Activated naive CD8-positive, alpha-beta T cell treated with anti-CD3 and anti-CD28 coated beads, Interleukin-2, amount 10 ng/mL, durations not matched to agents 7 days and 5 days (primary cell): ENCODE measurements at regions of chr1 and their contacts with region 1.

Region 1: DNA sequence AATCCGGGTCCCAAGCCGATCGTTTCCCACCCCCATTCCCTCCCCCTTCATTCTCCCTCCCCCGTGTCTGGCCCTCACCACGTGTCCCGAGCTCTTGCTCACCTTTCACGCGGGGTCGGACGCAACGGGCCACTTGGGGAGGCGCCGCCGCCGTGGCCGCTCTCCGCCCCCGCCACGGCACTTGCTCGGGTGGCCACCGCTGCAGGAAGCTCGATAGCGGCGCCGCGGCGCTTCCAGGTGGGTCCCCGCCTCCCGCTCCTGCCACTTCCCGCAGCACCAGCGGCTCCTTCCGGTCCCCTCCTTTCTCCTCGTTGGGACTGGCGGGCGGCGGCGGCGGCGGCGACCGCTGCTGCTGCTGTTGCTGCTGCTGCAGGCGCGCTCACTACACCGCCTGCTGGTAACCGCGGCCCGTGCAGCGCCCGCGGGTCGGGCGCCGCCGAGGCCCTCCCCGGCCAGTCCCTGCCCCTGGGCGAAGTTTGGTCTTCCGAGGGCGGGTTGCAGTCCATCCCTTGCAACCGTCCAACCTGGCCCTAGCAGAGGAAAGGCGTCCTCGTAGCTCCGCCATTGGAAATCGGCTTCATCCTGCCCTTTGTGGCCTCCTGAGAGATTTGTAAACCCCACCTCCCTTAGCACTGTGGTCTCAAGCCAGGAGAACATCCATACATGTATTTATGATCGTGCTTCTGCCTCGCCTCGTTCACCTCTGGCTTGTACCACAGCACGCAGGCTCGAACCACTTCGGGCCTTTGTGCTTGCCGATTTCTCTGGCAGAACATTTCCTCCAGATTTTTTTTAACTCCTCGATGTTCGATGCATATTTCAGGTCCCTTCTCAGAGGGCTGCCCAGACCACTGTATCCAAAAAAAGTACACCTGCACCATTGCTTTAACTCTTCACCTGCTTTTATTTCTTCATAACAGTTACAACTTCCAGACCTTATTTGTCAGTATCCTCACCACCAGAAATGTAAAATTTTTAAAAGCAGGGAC is 996 bp upstream of the ZZZ3 start:
- DNase-seq: peak; percentile 95
- ATAC-seq: peak; percentile 75
- H3K4me3 Mint-ChIP-seq: peak overlapping the region; percentile 90
- H3K27ac Mint-ChIP-seq: peak overlapping the region; percentile 95
- H3K4me1 Mint-ChIP-seq: peaks cover 17% of the 10 kb centered on the region
- H3K27me3 Mint-ChIP-seq: no peaks in the 10 kb centered on the region

Region 2: DNA sequence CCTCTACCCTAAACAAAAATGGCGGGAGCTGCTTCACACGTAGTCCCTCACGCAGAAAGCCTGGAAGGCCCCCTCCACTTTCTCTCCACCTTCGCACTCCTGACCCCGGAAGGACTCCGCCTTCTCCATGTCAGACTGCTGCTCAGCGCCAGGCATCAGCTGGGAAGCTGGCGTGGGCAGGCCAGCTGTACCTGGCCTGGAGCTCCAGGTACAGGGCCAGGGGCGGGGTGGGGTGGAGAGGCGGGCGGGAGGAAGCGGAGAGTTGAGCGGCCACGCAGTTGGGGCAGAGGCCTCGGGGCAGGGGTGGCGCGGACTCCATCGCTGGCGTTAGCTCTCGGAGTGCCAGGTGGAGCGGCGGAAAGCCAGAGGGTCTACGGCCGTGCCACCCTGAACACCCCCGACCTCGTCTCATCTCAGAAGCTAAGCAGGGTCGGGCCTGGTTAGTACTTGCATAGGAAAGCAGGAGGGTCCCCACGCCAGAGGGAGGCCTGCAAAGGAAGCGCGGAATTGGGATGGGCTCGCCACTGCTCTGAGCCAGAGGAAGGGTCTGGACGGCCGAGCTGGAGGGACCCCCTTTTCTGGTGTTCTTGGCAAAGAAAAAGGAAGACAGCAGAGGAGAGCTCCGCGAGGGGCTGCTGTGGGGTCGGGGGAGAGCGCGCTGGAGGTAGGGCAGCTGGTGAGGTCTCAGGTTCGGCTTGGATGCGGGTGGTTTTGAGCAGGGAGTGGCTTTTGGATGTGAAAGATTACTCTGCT is 96.3 kb after region 1 on chr1 and contains the start of gene MIGA1:
- POLR2A ChIA-PET with region 1: interaction called, 10 read pairs
- DNase-seq: peak; percentile 75
- ATAC-seq: peak; percentile 98
- H3K4me3 Mint-ChIP-seq: peak within 1 kb of the TSS; percentile 98
- H3K27ac Mint-ChIP-seq: peak within 1 kb of the TSS; percentile 86
- H3K4me1 Mint-ChIP-seq: peaks cover 25% of the 10 kb centered on the region
- H3K27me3 Mint-ChIP-seq: peaks cover 3% of the 10 kb centered on the region
- total RNA-seq, gene MIGA1: 13.6 to 14.3 TPM

Region 3: DNA sequence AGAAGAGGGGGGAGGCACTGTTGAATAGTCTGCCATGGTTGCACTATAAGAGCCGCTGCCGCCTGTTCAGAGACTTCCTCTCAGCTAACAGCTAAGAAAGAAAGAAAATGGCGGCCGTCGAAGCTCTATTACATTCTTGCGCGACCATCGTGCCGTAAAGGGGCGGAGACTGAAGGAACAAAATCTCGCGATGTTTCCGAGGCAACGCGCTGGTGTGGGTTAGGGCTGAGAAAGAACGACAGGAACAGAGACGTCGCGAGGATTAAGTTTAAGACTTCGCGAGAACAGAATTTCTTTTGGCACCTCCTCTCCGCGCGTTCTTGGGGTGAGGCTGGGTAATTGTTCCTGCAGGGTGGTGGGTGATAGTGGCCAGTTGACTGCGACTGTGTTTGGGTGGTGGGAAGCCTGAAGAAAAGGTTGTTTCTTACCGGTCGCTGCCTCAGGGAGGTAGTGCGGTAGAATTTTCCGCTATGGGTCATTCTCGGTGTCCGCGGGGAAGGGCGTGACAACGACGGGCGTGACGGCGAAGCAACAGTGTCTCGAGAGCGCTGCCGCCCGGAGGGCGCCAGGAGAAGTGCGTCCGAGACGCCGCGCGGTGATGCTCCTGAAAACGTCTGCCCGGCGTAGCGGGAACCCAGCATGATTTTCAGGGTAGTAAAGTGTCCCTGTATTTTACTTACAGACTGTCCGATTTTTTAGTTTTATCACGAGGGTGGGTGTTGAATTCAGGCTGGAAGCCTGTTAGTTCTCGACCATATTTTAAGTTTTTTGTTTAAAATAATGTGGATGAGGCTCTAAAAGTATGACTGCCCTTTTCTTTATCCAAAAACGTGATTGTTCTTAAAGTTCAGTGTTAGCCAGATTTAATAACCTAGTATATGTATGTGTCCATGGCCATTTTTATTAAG is 295.8 kb after region 1 on chr1 and contains the start of gene FUBP1:
- POLR2A ChIA-PET with region 1: interaction called, 18 read pairs
- DNase-seq: peak; percentile 86
- ATAC-seq: peak; percentile 83
- H3K4me3 Mint-ChIP-seq: no peak within 1 kb of the TSS
- H3K27ac Mint-ChIP-seq: no peak within 1 kb of the TSS
- H3K4me1 Mint-ChIP-seq: peaks cover 35% of the 10 kb centered on the region
- H3K27me3 Mint-ChIP-seq: no peaks in the 10 kb centered on the region
- total RNA-seq, gene FUBP1: 223 to 228 TPM